MCF 10A (cell line): ENCODE measurements at regions of chr5 and their contacts with region 1.

Region 1: GRCh38 chr5:141223112-141223783 is at the start of gene PCDHB14:
- DNase-seq: peak; percentile 79
- H3K4me3 Mint-ChIP-seq: peak within 1 kb of the TSS; percentile 84
- H3K27ac Mint-ChIP-seq: peak within 1 kb of the TSS; percentile 60
- H3K4me1 Mint-ChIP-seq: no peaks in the 10 kb centered on the region
- H3K27me3 Mint-ChIP-seq: no peaks in the 10 kb centered on the region
- CTCF ChIP-seq: peak; percentile 69
- total RNA-seq, gene PCDHB14: 4.7 and 6.2 TPM in 2 replicates

Region 2: DNA sequence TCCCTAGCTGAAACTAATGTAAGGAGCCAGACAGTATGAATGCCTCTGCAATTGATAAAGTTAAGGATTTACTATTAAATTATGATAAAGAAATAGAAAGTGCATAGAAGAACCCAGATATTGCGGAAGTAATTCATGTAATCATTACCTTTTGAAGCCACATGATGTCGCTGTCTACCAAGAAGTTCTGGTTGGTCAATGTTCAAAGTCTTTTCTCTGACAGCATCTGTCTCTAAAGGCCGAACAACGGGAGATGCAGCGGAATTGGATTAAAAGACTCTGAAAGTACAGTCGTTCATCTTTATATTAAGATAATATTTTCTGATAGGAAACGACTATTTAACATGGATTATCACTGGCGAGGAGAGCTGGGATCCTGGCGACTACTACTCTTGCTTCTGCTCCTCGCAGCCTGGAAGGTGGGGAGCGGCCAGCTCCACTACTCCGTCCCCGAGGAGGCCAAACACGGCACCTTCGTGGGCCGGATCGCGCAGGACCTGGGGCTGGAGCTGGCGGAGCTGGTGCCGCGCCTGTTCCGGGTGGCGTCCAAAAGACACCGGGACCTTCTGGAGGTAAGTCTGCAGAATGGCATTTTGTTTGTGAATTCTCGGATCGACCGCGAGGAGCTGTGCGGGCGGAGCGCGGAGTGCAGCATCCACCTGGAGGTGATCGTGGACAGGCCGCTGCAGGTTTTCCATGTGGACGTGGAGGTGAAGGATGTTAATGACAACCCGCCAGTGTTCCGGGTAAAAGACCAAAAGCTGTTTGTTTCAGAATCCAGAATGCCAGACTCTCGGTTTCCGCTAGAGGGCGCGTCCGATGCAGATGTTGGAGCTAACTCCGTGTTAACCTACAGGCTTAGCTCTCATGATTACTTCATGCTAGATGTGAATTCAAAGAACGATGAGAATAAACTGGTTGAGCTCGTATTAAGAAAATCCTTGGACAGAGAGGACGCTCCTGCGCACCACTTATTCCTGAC is 382.0 kb before region 1 on chr5 and contains the start of gene PCDHA8:
- CTCF ChIA-PET with region 1: no interaction called
- POLR2A ChIA-PET with region 1: no interaction called
- intact Hi-C with region 1: no loop called
- DNase-seq: peak; percentile 24
- H3K4me3 Mint-ChIP-seq: no peak within 1 kb of the TSS
- H3K27ac Mint-ChIP-seq: no peak within 1 kb of the TSS
- H3K4me1 Mint-ChIP-seq: no peaks in the 10 kb centered on the region
- H3K27me3 Mint-ChIP-seq: no peaks in the 10 kb centered on the region
- CTCF ChIP-seq: peak; percentile 20
- total RNA-seq, gene PCDHA8: 0.25 TPM in 1 of 2 replicates, not detected in the other

Region 3: DNA sequence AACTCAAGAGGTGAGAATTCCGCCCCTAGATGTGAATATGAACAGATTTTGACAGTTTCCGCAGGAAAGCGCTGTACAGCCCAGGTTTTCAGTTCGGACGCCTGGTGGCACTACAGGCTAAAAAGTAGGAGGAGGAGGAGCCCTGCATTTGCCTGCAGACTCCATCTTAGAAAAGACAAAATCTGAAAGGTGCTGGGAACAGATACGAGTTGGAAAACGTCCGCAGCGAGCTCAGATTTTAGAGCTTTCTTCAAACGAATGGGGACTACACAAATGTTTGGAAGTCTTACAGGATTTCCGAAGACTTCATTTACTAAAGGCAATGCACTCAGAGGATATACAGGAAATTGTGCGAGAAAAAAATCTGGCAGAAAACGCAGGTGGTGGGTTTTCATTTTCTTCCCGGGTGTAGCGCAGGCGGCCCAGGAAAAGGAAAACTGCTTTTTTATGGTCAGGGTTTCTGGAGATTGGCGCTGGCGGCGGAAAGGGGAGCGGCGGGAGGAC is 138.7 kb before region 1 on chr5:
- CTCF ChIA-PET with region 1: interaction called, 4 read pairs
- POLR2A ChIA-PET with region 1: no interaction called
- intact Hi-C with region 1: loop called (anchors 1 kb)
- DNase-seq: peak; percentile 49
- H3K4me3 Mint-ChIP-seq: peak overlapping the region; percentile 87
- H3K27ac Mint-ChIP-seq: peak overlapping the region; percentile 84
- H3K4me1 Mint-ChIP-seq: peaks cover 7% of the 10 kb centered on the region
- H3K27me3 Mint-ChIP-seq: no peaks in the 10 kb centered on the region
- CTCF ChIP-seq: peak; percentile 59

Region 4: DNA sequence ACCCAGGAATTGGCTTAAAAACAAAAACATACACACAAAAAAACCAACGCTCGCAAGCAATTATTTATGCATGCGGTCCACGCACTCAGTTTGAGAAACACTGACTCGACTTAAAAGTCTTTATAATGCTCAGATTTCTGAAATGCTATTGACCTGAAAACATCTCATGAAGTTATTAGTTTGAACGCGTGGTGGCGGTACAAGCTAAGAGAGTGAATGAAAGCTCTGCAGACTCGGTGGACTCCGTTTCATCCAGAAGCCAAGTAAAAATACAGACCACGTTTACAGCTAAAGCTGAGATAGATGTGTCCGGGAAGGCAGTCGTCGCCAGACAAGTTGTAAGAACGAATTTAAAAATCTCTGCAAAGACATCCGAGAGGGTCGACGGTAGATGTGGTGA is 73.4 kb before region 1 on chr5 and contains the start of gene PCDHB6:
- CTCF ChIA-PET with region 1: no interaction called
- POLR2A ChIA-PET with region 1: no interaction called
- intact Hi-C with region 1: no loop called
- DNase-seq: peak; percentile 6
- H3K4me3 Mint-ChIP-seq: peak within 1 kb of the TSS; percentile 55
- H3K27ac Mint-ChIP-seq: no peak within 1 kb of the TSS
- H3K4me1 Mint-ChIP-seq: no peaks in the 10 kb centered on the region
- H3K27me3 Mint-ChIP-seq: no peaks in the 10 kb centered on the region
- CTCF ChIP-seq: no peak
- total RNA-seq, gene PCDHB6: 0.19 and 0.22 TPM in 2 replicates

Region 5: DNA sequence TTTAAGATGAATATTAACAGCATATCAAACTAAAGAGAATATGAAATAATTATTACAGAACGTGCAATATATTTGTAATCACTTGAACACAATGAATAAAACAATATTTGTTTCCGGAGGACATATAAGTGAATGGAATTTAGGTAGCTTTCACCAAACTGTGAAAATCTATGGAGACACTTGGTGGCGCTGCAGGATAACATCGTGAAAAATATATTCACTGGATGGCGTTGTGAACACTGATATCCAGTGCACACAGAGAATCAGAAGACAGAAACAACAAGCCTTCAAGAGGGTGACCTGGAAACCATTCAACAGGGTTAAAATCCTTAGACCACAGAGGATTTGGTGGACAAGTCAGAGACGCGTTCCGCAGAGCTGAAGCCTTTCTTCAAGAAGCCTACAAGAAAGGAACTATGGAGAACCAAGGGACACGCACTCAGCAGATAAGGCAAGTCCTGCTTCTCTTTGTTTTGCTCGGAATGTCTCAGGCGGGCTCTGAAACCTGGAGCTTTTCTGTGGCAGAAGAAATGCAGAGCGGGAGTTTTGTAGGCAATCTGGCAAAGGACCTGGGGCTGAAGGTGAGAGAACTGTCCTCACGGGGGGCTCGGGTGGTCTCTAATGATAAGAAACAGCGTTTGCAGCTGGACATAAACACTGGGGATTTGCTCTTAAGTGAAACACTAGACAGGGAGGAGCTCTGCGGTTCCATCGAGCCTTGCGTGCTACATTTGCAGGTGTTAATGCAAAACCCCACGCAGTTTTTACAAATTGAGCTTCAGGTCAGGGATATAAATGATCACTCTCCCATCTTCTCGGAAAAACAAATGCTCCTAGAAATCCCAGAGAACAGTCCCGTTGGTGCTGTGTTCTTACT is 23.7 kb before region 1 on chr5 and contains the start of gene PCDHB11:
- CTCF ChIA-PET with region 1: interaction called, 14 read pairs
- POLR2A ChIA-PET with region 1: no interaction called
- intact Hi-C with region 1: no loop called
- DNase-seq: peak; percentile 32
- H3K4me3 Mint-ChIP-seq: peak within 1 kb of the TSS; percentile 61
- H3K27ac Mint-ChIP-seq: no peak within 1 kb of the TSS
- H3K4me1 Mint-ChIP-seq: no peaks in the 10 kb centered on the region
- H3K27me3 Mint-ChIP-seq: no peaks in the 10 kb centered on the region
- CTCF ChIP-seq: peak; percentile 40
- total RNA-seq, gene PCDHB11: 0.75 and 1.3 TPM in 2 replicates

Region 6: GRCh38 chr5:141234109-141234667 is 10.9 kb after region 1 on chr5:
- CTCF ChIA-PET with region 1: interaction called, 17 read pairs
- POLR2A ChIA-PET with region 1: interaction called, 6 read pairs
- intact Hi-C with region 1: no loop called
- DNase-seq: no peak
- H3K4me3 Mint-ChIP-seq: no peak overlapping the region
- H3K27ac Mint-ChIP-seq: no peak overlapping the region
- H3K4me1 Mint-ChIP-seq: no peaks in the 10 kb centered on the region
- H3K27me3 Mint-ChIP-seq: no peaks in the 10 kb centered on the region
- CTCF ChIP-seq: no peak

Region 7: GRCh38 chr5:141387233-141387949 is 164.1 kb after region 1 on chr5 and contains the start of gene PCDHGB4:
- CTCF ChIA-PET with region 1: interaction called, 11 read pairs
- POLR2A ChIA-PET with region 1: no interaction called
- intact Hi-C with region 1: no loop called
- DNase-seq: no peak
- H3K4me3 Mint-ChIP-seq: no peak within 1 kb of the TSS
- H3K27ac Mint-ChIP-seq: no peak within 1 kb of the TSS
- H3K4me1 Mint-ChIP-seq: no peaks in the 10 kb centered on the region
- H3K27me3 Mint-ChIP-seq: no peaks in the 10 kb centered on the region
- CTCF ChIP-seq: no peak
- total RNA-seq, gene PCDHGB4: 0.49 and 0.79 TPM in 2 replicates

Region 8: DNA sequence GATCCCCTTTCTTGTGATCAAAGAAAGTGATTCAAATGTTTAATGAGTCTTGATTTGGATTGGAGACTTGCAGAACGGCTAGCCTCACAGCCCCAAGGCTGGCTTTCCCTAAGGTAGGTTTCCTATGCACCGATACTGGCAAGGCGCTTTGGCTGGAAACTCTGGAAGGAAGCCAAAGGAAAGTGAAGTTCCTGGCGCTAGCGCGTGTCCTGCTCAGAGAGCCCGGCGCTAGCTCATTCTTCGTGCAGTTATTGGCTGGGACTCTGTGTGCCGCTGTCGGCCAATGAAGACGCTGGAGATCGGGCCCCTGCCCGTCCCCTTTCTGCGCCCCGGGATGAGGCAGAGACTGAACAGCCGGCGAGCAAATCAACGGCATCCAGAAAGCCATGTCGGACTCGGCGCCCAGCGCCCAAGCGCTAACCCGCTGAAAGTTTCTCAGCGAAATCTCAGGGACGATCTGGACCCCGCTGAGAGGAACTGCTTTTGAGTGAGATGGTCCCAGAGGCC is 252.4 kb after region 1 on chr5 and contains the start of gene PCDHGC3:
- CTCF ChIA-PET with region 1: interaction called, 8 read pairs
- POLR2A ChIA-PET with region 1: interaction called, 3 read pairs
- intact Hi-C with region 1: loop called (anchors 2 kb)
- DNase-seq: peak; percentile 98
- H3K4me3 Mint-ChIP-seq: peak within 1 kb of the TSS; percentile 94
- H3K27ac Mint-ChIP-seq: peak within 1 kb of the TSS; percentile 84
- H3K4me1 Mint-ChIP-seq: peaks cover 18% of the 10 kb centered on the region
- H3K27me3 Mint-ChIP-seq: no peaks in the 10 kb centered on the region
- CTCF ChIP-seq: peak; percentile 55
- total RNA-seq, gene PCDHGC3: 17.3 and 31.7 TPM in 2 replicates

Region 9: GRCh38 chr5:142922223-142922952 is 1699.1 kb after region 1 on chr5:
- CTCF ChIA-PET with region 1: no interaction called
- POLR2A ChIA-PET with region 1: no interaction called
- intact Hi-C with region 1: no loop called
- DNase-seq: peak; percentile 56
- H3K4me3 Mint-ChIP-seq: no peak overlapping the region
- H3K27ac Mint-ChIP-seq: no peak overlapping the region
- H3K4me1 Mint-ChIP-seq: peaks cover 25% of the 10 kb centered on the region
- H3K27me3 Mint-ChIP-seq: no peaks in the 10 kb centered on the region
- CTCF ChIP-seq: peak; percentile 68